ENCODE measurements at regions of chr9 and their contacts with region 1.

Region 1: DNA sequence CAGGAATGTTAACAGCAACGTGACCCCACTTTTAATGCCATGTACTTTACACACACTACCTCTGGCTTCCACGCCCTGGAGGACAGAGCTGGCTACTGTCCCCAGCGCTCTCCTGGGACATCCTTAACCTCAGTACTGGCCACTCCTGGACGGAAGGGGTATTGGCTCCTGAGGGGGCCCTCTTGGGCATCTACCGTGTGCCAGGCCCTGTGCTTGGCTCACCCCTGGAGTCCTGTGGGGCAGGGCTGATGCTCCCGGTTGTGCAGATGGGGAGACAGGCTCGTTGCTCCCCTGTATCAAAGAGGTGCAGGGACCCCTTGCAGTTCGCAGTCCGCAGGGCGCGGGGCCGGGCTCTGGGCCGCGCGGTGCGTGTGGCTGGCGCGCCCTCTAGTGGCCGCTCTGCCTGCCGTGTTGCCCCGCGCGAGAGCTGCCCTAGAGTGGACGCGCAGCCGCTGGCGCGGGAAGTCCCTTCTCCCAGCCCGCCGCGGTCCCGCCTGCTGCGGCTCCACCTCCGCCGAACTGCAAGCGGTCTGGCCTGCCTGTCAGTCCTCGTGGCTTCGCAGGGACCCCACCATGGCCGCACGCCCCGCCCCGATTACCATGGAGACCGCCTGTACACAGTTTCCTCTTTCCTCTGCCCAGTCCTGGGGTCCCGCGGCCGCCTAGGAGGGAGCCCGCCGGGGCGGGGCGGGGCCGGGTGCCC is at the start of gene WDR38:
- DNase-seq: no peak
- ATAC-seq: peak; percentile 91
- H3K4me3 ChIP-seq: peak within 1 kb of the TSS; percentile 51; the same call in 1 of the 2 replicates
- H3K27ac ChIP-seq: no peak within 1 kb of the TSS
- H3K4me1 ChIP-seq: peaks cover 5% of the 10 kb centered on the region
- H3K27me3 ChIP-seq: no peaks in the 10 kb centered on the region
- CTCF ChIP-seq: peak; percentile 82 to 98 (median 87)
- EP300 ChIP-seq: no peak
- POLR2A ChIP-seq: no peak
- RAD21 ChIP-seq: peak; percentile 79
- polyA plus RNA-seq, gene WDR38: not detected

Region 2: GRCh38 chr9:124764774-124765438 is 88.1 kb before region 1 on chr9:
- CTCF ChIA-PET with region 1: interaction called, 575 read pairs
- POLR2A ChIA-PET with region 1: interaction called, 7 read pairs
- RAD21 ChIA-PET with region 1: interaction called, 180 read pairs
- SMC1A ChIA-PET with region 1: interaction called, 233 read pairs
- in situ Hi-C with region 1: loop called (anchors 5 kb)
- intact Hi-C with region 1: no loop called
- DNase-seq: no peak
- ATAC-seq: peak; percentile 81
- H3K4me3 ChIP-seq: no peak overlapping the region; the same call in 1 of the 2 replicates
- H3K27ac ChIP-seq: peak overlapping the region; percentile 28; the same call in 1 of the 2 replicates
- H3K4me1 ChIP-seq: peaks cover 9% of the 10 kb centered on the region
- H3K27me3 ChIP-seq: no peaks in the 10 kb centered on the region
- CTCF ChIP-seq: peak; percentile 33 to 62 (median 54); a peak in 5 of 6 replicates
- EP300 ChIP-seq: no peak
- POLR2A ChIP-seq: no peak
- RAD21 ChIP-seq: peak; percentile 62

Region 3: DNA sequence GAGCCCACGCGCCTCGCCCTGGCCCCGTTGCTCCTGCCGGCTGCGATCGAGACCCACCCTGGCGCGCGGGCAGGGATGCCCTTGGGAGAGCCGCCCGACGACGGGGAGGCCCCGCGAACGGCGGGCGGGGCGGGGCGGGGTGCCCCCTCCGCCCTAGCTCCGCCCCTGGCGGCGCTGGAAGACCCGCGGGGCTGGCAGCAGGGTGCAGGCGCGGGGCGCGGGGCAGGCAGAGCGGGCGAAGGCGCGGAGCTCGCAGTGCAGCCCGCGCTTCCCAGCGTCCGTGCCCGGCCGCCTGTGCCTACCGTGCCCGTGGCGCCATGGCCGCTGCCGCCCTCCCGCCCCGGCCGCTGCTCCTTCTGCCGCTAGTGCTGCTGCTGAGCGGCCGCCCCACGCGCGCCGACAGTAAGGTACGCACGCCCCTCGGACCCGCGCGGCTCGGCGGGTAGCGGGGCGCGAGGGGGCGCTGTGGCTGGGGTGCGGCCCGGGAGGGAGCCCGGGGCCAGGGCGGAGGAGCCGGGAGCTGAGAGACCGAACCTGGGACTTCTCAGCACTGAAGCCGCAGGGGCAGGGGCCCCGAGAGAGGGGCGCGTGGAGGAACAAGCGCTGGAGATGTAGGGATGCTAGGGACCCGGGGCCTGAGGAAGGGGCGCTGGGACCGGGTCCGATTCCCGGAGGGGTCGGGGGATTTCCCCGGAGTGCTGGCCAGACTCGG is 75.9 kb before region 1 on chr9 and contains the start of gene OLFML2A:
- CTCF ChIA-PET with region 1: interaction called, 575 read pairs
- POLR2A ChIA-PET with region 1: interaction called, 8 read pairs
- RAD21 ChIA-PET with region 1: interaction called, 180 read pairs
- SMC1A ChIA-PET with region 1: interaction called, 233 read pairs
- in situ Hi-C with region 1: loop called (anchors 5 kb)
- intact Hi-C with region 1: loop called (anchors 1 kb)
- DNase-seq: no peak
- ATAC-seq: peak; percentile 14
- H3K4me3 ChIP-seq: peak within 1 kb of the TSS; percentile 62
- H3K27ac ChIP-seq: no peak within 1 kb of the TSS
- H3K4me1 ChIP-seq: peaks cover 15% of the 10 kb centered on the region
- H3K27me3 ChIP-seq: peaks cover 5 to 6% of the 10 kb centered on the region in 2 experiments
- CTCF ChIP-seq: peak; percentile 16 to 33 (median 20); a peak in 4 of 6 replicates
- EP300 ChIP-seq: no peak
- POLR2A ChIP-seq: no peak
- RAD21 ChIP-seq: peak; percentile 27; the same call in 1 of the 2 replicates
- polyA plus RNA-seq, gene OLFML2A: 0.02 TPM in 1 of 2 experiments, not detected in the other

Region 4: DNA sequence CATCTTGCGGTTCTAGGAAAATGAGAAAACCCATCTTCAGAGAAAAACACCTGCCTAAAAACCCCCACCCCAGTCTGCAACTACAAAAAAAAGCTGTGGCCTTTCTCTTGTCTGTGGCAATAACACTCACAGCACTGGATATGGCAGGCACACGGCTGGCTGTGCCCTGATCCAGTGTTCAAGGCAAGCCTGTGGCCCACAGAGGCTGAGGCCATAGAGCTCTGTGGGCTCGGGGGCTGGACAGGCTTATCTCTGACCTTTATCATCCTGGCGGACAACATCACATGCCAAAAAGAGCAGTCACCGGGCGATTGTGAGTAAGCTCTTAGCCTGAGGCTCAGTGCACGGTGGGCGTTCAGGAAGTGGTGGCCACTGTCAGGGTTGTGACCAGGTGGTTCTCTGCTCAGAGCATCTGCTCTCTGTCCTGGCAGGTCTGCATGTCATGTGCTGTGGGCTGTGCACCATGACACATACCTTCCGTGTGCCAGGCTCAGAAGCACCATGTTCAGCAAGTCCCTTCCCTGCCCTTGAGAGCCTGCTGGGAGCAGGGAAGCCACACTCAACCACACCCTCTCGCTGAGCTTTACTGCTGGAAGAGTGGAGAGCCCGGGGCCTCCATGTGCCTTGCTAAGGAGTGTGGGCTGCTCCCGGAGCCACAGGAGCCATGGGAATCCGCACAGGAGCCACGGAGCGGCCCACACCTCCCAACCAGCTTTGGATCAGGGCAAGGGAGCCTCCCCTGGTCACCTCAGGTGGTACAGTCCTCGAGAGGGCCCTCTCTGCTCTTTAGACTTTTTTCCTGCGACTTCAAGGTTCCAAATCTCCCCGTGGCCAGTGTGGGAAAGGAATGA is 34.3 kb before region 1 on chr9:
- CTCF ChIA-PET with region 1: interaction called, 18 read pairs
- POLR2A ChIA-PET with region 1: interaction called, 3 read pairs
- RAD21 ChIA-PET with region 1: interaction called, 11 read pairs
- SMC1A ChIA-PET with region 1: interaction called, 6 read pairs
- in situ Hi-C with region 1: no loop called
- intact Hi-C with region 1: no loop called
- DNase-seq: no peak
- ATAC-seq: peak; percentile 75
- H3K4me3 ChIP-seq: no peak overlapping the region
- H3K27ac ChIP-seq: 0 out of 2 replicates have a peak overlapping the region, but pooled peaks have one; percentile 28
- H3K4me1 ChIP-seq: peaks cover 11% of the 10 kb centered on the region
- H3K27me3 ChIP-seq: no peaks in the 10 kb centered on the region
- CTCF ChIP-seq: no peak
- EP300 ChIP-seq: no peak
- POLR2A ChIP-seq: peak; percentile 52; the same call in 1 of the 2 replicates
- RAD21 ChIP-seq: no peak

Region 5: GRCh38 chr9:124868511-124869465 is 15.8 kb after region 1 on chr9:
- CTCF ChIA-PET with region 1: interaction called, 37 read pairs
- POLR2A ChIA-PET with region 1: interaction called, 5 read pairs
- RAD21 ChIA-PET with region 1: interaction called, 11 read pairs
- SMC1A ChIA-PET with region 1: interaction called, 15 read pairs
- in situ Hi-C with region 1: no loop called
- intact Hi-C with region 1: no loop called
- DNase-seq: no peak
- ATAC-seq: peak; percentile 75
- H3K4me3 ChIP-seq: peak overlapping the region; percentile 94
- H3K27ac ChIP-seq: peak overlapping the region; percentile 94
- H3K4me1 ChIP-seq: peaks cover 17% of the 10 kb centered on the region
- H3K27me3 ChIP-seq: no peaks in the 10 kb centered on the region
- CTCF ChIP-seq: peak; percentile 31 to 41 (median 40); a peak in 4 of 6 replicates
- EP300 ChIP-seq: no peak
- POLR2A ChIP-seq: peak; percentile 88
- RAD21 ChIP-seq: no peak

Measured in GM12878 (cell line).